ENCODE measurements at regions of chr3 and their contacts with region 1.

Region 1: DNA sequence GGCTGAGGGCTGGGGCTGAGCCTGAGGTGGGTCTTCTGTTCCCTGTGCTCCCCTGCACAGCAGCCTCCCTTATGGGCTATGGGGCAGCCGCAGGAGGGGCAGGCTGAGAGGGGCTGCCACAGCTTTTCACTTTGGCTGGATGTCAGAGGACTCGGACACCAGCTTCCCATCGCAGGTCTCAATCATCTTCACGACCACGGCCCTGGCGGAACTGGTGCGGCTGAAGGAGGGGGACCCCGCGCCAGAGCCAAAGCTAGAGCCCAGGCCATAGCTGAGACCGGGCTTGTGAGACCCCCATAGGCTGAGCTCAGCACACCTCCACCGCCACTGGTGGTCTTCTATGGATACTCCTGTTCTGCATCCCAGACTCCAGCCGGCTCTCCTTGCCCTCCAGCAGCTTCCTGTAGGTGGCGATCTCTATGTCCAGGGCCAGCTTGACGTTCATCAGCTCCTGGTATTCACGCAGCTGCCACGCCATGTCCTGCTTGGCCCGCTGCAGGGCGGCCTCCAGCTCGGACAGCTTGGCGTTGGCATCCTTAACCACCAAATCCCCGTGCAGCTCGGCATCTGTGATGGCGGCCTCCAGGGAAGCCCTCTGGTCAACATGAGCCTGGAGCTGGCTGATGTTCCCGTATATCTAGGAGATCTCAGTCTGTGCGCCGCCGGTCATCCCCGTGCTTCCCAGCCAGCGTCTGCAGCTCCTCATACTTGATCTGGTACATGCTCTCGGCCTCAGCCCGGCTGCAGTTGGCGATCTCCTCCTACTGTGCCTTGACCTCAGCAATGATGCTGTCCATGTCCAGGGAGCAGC is 181.7 kb upstream of the SYNPR start:
- DNase-seq: peak in 1 of 2 experiments; percentile 54
- H3K4me3 ChIP-seq: no peak overlapping the region
- H3K27ac ChIP-seq: no peak overlapping the region
- H3K4me1 ChIP-seq: peaks cover 0 to 9% (median 4%) of the 10 kb centered on the region in 4 experiments; a peak in 5 of 7 replicates
- H3K27me3 ChIP-seq: no peaks in the 10 kb centered on the region
- CTCF ChIP-seq: peak; percentile 38 to 54 (median 49); a peak in 3 of 4 replicates
- EP300 ChIP-seq: no peak
- POLR2A ChIP-seq: no peak
- RAD21 ChIP-seq: peak; percentile 12 to 38; a peak in 1 of 4 replicates

Region 2: GRCh38 chr3:63076357-63076756 is 20.1 kb before region 1 on chr3:
- CTCF ChIA-PET with region 1: interaction called, 24 read pairs
- POLR2A ChIA-PET with region 1: no interaction called
- DNase-seq: no peak
- H3K4me3 ChIP-seq: no peak overlapping the region
- H3K27ac ChIP-seq: no peak overlapping the region
- H3K4me1 ChIP-seq: no peaks in the 10 kb centered on the region; a peak in 1 of 7 replicates
- H3K27me3 ChIP-seq: no peaks in the 10 kb centered on the region
- CTCF ChIP-seq: no peak
- EP300 ChIP-seq: no peak
- POLR2A ChIP-seq: no peak
- RAD21 ChIP-seq: no peak

Region 3: GRCh38 chr3:63116913-63117312 is 20.5 kb after region 1 on chr3:
- CTCF ChIA-PET with region 1: interaction called, 18 read pairs
- POLR2A ChIA-PET with region 1: no interaction called
- DNase-seq: no peak
- H3K4me3 ChIP-seq: no peak overlapping the region
- H3K27ac ChIP-seq: no peak overlapping the region
- H3K4me1 ChIP-seq: no peaks in the 10 kb centered on the region
- H3K27me3 ChIP-seq: no peaks in the 10 kb centered on the region
- CTCF ChIP-seq: no peak
- EP300 ChIP-seq: no peak
- POLR2A ChIP-seq: no peak
- RAD21 ChIP-seq: no peak

Region 4: GRCh38 chr3:63128380-63128779 is 31.9 kb after region 1 on chr3:
- CTCF ChIA-PET with region 1: interaction called, 10 read pairs
- POLR2A ChIA-PET with region 1: no interaction called
- DNase-seq: no peak
- H3K4me3 ChIP-seq: no peak overlapping the region
- H3K27ac ChIP-seq: no peak overlapping the region
- H3K4me1 ChIP-seq: peaks cover 2 to 9% (median 6%) of the 10 kb centered on the region in 4 experiments; a peak in 6 of 7 replicates
- H3K27me3 ChIP-seq: no peaks in the 10 kb centered on the region
- CTCF ChIP-seq: no peak
- EP300 ChIP-seq: no peak
- POLR2A ChIP-seq: no peak
- RAD21 ChIP-seq: no peak

Region 5: GRCh38 chr3:63193629-63194028 is 97.2 kb after region 1 on chr3:
- CTCF ChIA-PET with region 1: interaction called, 13 read pairs
- POLR2A ChIA-PET with region 1: no interaction called
- DNase-seq: no peak
- H3K4me3 ChIP-seq: no peak overlapping the region
- H3K27ac ChIP-seq: no peak overlapping the region
- H3K4me1 ChIP-seq: no peaks in the 10 kb centered on the region
- H3K27me3 ChIP-seq: no peaks in the 10 kb centered on the region
- CTCF ChIP-seq: peak in 2 of 3 experiments; percentile 41 to 47; a peak in 2 of 4 replicates
- EP300 ChIP-seq: no peak
- POLR2A ChIP-seq: no peak
- RAD21 ChIP-seq: peak; percentile 81 to 86

Region 6: DNA sequence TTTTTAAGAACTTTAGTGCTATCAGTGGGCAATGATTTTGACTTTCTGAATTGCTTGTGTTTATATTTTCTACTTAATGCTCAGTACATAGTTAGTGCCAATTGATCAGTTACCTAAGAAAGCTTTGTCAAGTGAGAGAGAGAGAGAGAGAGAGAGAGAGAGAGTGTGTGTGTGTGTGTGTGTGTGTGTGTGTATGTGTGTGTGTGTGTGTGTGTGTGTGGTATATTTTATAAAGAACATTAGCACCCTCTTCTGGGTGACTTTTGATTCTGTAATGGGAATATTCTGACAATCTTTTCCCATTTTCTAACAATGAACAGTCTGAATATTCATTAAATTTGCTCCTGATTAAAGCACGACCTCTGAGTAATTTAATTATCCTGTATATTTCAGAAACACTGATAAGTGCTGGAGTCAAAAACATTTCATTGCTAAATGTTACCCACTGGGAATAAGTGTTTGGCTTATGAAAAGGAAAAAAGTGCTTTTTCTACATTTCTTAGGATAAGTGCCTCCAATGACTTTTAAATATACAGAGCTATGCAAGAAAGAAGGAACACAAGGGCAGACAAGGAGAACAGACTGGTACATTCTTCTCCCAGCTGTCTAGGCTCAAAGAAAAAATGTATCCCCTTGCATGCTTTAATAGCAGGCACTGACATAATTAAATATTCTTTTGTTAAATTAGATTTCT is 149.2 kb after region 1 on chr3:
- CTCF ChIA-PET with region 1: no interaction called
- POLR2A ChIA-PET with region 1: no interaction called
- DNase-seq: no peak
- H3K4me3 ChIP-seq: no peak overlapping the region
- H3K27ac ChIP-seq: no peak overlapping the region
- H3K4me1 ChIP-seq: no peaks in the 10 kb centered on the region
- H3K27me3 ChIP-seq: peaks cover 0 to 1% (median 0%) of the 10 kb centered on the region in 4 experiments; a peak in 1 of 7 replicates
- CTCF ChIP-seq: no peak
- EP300 ChIP-seq: no peak
- POLR2A ChIP-seq: no peak
- RAD21 ChIP-seq: peak; percentile 22 to 33; a peak in 3 of 4 replicates

Region 7: DNA sequence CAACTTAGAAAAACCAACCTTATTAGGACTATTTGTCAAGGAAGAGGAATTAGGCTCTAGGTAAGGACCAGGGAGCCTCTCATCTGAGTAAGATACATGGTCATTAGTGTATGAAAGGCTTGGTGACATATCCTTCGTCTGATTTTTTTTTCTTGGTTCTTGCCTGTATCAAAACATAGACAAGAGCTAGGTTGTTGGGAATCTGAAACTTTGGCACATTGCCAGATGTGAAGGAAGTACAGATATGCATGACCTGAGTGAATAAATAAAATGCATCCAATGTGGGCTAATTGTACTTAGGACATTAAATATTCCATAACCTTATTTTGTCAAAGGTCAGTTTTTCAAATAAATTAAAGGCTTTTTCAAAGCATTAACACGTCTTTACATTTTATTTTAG is 333.5 kb after region 1 on chr3:
- CTCF ChIA-PET with region 1: no interaction called
- POLR2A ChIA-PET with region 1: no interaction called
- DNase-seq: no peak
- H3K4me3 ChIP-seq: no peak overlapping the region
- H3K27ac ChIP-seq: no peak overlapping the region
- H3K4me1 ChIP-seq: peaks cover 0 to 6% (median 1%) of the 10 kb centered on the region in 4 experiments; a peak in 2 of 7 replicates
- H3K27me3 ChIP-seq: no peaks in the 10 kb centered on the region
- CTCF ChIP-seq: no peak
- EP300 ChIP-seq: no peak
- POLR2A ChIP-seq: no peak
- RAD21 ChIP-seq: no peak

Measured in H1 (cell line).